ENCODE measurements at regions of chr2 and their contacts with region 1.

Region 1: DNA sequence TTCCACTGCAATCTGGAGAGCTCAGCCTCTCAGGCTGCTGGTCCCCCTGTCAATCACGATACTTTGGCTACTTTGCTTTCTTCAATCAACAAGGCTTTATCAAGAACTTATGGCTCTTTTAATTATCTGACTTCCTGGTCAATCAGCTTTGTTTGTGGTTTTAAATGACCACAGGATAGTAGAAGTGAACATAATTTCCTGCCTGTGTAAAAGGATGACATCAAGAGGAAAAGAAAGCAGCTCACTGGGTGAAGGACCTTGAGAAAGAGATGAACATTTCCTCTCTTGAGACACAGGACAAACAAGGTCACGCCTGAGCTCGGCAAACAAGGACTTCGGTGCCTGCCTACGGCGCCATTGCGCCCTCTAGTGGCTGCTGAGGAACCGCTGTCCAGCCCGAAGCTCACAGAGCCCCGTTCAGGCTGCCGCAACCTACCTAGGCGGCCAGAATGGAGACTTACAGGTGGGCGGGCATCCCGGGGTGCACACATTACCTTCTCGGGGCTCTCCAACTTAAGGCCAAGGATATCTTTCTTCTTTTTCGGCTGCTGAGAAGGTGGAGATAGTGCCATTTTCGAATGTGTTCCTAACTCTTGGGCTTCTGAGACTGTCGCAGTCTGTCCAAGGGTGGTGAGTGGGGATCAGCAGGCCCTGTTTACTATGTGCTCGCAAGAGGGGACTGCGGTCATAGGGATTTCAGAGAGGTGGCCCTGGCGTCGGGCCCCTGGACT is 54.0 kb downstream of the IL1RL2 start:
- DNase-seq: peak; percentile 92
- ATAC-seq: peak; percentile 90
- H3K4me3 Mint-ChIP-seq: no peak overlapping the region
- H3K27ac Mint-ChIP-seq: peak overlapping the region; percentile 65
- H3K4me1 Mint-ChIP-seq: peaks cover 32% of the 10 kb centered on the region
- H3K27me3 Mint-ChIP-seq: no peaks in the 10 kb centered on the region
- CTCF ChIP-seq: peak; percentile 92

Region 2: GRCh38 chr2:101981504-101981903 is 259.3 kb before region 1 on chr2:
- CTCF ChIA-PET with region 1: no interaction called
- POLR2A ChIA-PET with region 1: no interaction called
- intact Hi-C with region 1: no loop called
- DNase-seq: peak; percentile 16
- ATAC-seq: peak; percentile 68
- H3K4me3 Mint-ChIP-seq: no peak overlapping the region
- H3K27ac Mint-ChIP-seq: no peak overlapping the region
- H3K4me1 Mint-ChIP-seq: peaks cover 13% of the 10 kb centered on the region
- H3K27me3 Mint-ChIP-seq: no peaks in the 10 kb centered on the region
- CTCF ChIP-seq: no peak

Region 3: DNA sequence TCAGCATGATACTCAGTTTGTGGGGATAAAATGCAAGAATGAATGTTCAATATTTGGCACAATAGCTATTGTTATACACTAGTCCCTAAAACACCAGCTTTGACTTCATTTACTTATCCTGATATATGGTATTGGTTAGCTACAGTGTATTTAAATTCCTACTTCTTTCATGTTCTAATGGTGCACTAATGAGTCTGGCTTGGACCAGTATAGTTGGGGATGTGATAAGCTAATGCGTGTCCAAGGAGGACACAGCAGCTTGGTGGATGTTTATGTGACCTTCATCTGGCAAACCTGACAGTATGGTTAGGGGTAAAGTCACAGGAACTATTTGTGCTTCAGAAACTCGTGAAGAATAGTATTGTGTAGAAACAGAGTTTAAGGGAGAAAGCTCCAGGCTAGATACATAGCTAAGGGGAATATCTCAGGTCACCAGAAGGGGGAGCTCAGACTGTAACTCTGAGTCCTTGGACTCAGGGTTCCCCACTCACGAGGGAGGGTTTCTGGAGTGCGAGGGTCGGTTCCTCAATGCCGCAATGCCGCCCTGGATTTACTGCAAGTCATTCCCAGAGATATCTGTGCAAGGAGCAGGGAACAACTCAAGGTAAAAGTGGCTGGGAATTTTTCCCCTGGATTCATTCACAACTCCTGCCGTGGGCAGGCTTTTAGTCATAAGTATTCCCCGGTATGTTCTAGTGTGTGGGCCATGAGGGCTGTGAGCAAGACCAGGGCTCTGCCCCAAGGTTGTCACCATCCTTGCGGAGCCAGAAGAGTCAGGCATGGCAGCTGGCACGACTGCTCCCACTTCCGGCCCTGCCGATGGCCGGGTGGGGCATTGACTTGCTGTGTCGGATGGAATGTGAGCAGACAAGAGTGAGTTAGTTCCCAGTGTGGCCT is 234.6 kb before region 1 on chr2:
- CTCF ChIA-PET with region 1: interaction called, 222 read pairs
- POLR2A ChIA-PET with region 1: no interaction called
- intact Hi-C with region 1: no loop called
- DNase-seq: peak; percentile 54
- ATAC-seq: peak; percentile 65
- H3K4me3 Mint-ChIP-seq: no peak overlapping the region
- H3K27ac Mint-ChIP-seq: no peak overlapping the region
- H3K4me1 Mint-ChIP-seq: peaks cover 14% of the 10 kb centered on the region
- H3K27me3 Mint-ChIP-seq: no peaks in the 10 kb centered on the region
- CTCF ChIP-seq: peak; percentile 64

Region 4: GRCh38 chr2:102057502-102058292 is 183.1 kb before region 1 on chr2:
- CTCF ChIA-PET with region 1: interaction called, 22 read pairs
- POLR2A ChIA-PET with region 1: interaction called, 4 read pairs
- intact Hi-C with region 1: no loop called
- DNase-seq: peak; percentile 47
- ATAC-seq: no peak
- H3K4me3 Mint-ChIP-seq: no peak overlapping the region
- H3K27ac Mint-ChIP-seq: no peak overlapping the region
- H3K4me1 Mint-ChIP-seq: peaks cover 16% of the 10 kb centered on the region
- H3K27me3 Mint-ChIP-seq: no peaks in the 10 kb centered on the region
- CTCF ChIP-seq: no peak

Region 5: GRCh38 chr2:102126651-102127050 is 114.2 kb before region 1 on chr2:
- CTCF ChIA-PET with region 1: interaction called, 20 read pairs
- POLR2A ChIA-PET with region 1: no interaction called
- intact Hi-C with region 1: no loop called
- DNase-seq: no peak
- ATAC-seq: no peak
- H3K4me3 Mint-ChIP-seq: no peak overlapping the region
- H3K27ac Mint-ChIP-seq: no peak overlapping the region
- H3K4me1 Mint-ChIP-seq: peaks cover 11% of the 10 kb centered on the region
- H3K27me3 Mint-ChIP-seq: no peaks in the 10 kb centered on the region
- CTCF ChIP-seq: no peak

Region 6: DNA sequence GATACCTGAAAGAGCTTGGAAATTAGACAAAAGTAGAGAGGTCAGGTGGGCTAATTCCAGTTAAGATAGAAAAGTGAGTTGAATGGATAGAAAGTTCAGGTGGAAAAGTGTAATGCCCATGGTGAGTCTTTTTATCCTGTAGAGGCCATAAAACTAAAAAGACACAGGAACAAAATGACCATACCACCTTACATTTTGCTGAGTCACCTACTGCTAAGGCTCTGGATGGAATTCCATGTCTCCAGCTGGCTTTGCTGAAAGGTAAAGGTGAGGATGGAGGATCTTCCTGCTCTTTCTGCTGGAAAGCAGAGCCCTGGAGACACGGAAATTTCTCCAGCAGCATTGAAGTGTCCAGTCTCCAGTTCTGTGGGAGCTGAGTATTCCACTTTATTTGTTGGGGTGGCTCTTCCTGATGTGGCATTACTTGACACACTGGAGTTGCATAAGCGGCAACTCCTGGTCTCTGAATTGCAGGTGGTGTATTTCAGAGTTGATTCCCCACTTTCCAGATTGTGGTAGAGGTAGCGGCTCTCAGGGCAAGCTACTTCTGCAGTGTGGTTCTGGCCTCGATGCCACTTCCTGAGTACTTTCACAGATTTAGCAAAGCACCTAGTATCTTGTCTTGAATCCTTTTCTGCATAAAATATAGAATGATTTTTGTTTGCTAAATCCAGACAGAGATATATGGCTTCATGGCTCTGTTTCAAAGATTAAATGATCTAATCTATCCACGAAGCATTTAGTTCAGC is 43.2 kb before region 1 on chr2:
- CTCF ChIA-PET with region 1: interaction called, 13 read pairs
- POLR2A ChIA-PET with region 1: no interaction called
- intact Hi-C with region 1: no loop called
- DNase-seq: peak; percentile 5
- ATAC-seq: no peak
- H3K4me3 Mint-ChIP-seq: no peak overlapping the region
- H3K27ac Mint-ChIP-seq: no peak overlapping the region
- H3K4me1 Mint-ChIP-seq: peaks cover 6% of the 10 kb centered on the region
- H3K27me3 Mint-ChIP-seq: peaks cover 4% of the 10 kb centered on the region
- CTCF ChIP-seq: no peak

Region 7: GRCh38 chr2:102283996-102284395 is 43.2 kb after region 1 on chr2:
- CTCF ChIA-PET with region 1: interaction called, 12 read pairs
- POLR2A ChIA-PET with region 1: no interaction called
- intact Hi-C with region 1: no loop called
- DNase-seq: no peak
- ATAC-seq: no peak
- H3K4me3 Mint-ChIP-seq: no peak overlapping the region
- H3K27ac Mint-ChIP-seq: no peak overlapping the region
- H3K4me1 Mint-ChIP-seq: no peaks in the 10 kb centered on the region
- H3K27me3 Mint-ChIP-seq: peaks cover 4% of the 10 kb centered on the region
- CTCF ChIP-seq: no peak

Region 8: DNA sequence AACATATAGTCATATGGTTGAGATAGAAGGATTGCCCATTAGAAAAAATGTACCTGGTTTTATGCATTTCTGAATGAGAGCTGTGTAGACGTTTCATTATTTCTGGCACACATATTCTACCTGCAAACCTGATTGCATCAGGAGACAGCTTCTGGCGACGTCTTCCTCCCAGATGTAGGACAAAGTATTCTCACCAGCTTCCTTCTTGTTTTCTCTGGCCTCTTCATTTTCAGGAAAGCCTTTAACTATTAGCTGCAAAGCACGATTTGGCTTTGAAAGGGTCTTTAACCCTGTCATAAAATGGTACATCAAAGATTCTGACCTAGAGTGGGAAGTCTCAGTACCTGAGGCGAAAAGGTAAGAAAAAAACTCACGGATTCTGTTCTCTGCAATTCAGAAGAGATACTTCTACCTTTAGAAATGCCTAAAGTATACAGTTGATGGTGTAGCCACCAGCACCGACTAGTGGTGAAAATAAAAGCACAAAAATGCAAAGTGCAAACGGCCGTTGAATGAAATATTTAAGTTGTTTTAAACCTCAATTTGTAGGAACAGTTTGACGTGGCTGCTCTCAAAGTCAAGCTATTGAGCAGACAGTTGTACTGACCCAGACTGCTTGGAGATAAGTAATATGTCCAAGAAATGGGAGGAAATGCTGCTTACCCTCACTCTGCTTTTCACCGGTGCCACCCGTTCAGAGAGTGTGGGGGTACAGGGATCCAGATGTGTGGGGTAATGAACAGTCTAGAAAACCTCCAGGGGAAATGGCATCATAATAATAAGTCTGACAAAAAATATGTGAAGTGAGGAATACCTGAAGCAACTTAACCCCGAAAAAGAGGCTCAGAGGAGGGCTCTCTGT is 202.4 kb after region 1 on chr2:
- CTCF ChIA-PET with region 1: interaction called, 68 read pairs
- POLR2A ChIA-PET with region 1: no interaction called
- intact Hi-C with region 1: no loop called
- DNase-seq: peak; percentile 71
- ATAC-seq: peak; percentile 79
- H3K4me3 Mint-ChIP-seq: no peak overlapping the region
- H3K27ac Mint-ChIP-seq: peak overlapping the region; percentile 37
- H3K4me1 Mint-ChIP-seq: peaks cover 9% of the 10 kb centered on the region
- H3K27me3 Mint-ChIP-seq: no peaks in the 10 kb centered on the region
- CTCF ChIP-seq: peak; percentile 87

Region 9: GRCh38 chr2:102540641-102541281 is 300.0 kb after region 1 on chr2:
- CTCF ChIA-PET with region 1: no interaction called
- POLR2A ChIA-PET with region 1: no interaction called
- intact Hi-C with region 1: no loop called
- DNase-seq: no peak
- ATAC-seq: no peak
- H3K4me3 Mint-ChIP-seq: no peak overlapping the region
- H3K27ac Mint-ChIP-seq: no peak overlapping the region
- H3K4me1 Mint-ChIP-seq: no peaks in the 10 kb centered on the region
- H3K27me3 Mint-ChIP-seq: peaks cover 7% of the 10 kb centered on the region
- CTCF ChIP-seq: no peak